ENCODE measurements at regions of chr22 and their contacts with region 1.

Region 1: DNA sequence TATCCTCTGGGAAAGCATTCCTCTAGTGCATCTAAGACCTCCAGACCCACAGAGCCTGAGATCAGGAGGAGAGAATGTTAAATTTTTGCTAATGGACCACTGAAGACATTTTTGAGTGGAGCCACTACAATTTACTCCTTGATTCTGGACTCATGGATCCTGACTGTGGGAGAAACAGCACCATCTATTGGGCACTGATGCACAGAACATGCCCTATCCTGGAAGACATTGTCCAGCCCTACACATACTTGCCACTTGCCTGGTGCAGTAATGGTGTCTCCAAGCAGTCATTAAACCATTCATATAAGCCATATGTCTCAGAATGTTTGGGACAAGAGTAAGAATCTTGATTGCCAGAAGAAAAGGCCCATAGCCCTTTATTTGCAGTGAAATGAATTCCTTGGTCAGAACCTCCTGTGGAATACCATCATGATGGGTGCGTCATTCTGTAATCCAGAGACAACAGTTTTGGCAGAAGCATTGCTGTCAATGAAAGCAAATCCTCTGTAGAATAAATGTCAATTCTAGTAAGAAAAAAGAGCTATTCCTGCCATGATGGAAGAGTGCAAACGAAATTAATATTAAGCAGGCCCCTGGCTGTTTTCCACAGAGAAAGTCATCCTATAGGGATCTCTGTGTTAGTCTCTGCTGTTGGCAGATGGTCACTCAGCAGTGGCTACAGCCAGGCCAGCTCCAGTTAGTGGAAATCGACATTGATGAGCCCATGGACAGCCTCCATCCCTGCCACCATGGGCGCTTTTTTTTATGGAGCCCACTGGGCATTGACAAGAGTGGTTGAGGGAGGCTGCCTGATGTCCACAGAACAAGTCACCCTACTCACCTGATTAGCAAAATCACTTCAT is 43.5 kb downstream of the GGTLC2 start:
- DNase-seq: peak; percentile 65
- ATAC-seq: peak; percentile 79
- H3K4me3 ChIP-seq: no peak overlapping the region
- H3K27ac ChIP-seq: no peak overlapping the region
- H3K4me1 ChIP-seq: peaks cover 21% of the 10 kb centered on the region
- H3K27me3 ChIP-seq: no peaks in the 10 kb centered on the region; the same call in none of the 2 replicates
- CTCF ChIP-seq: peak; percentile 84
- POLR2A ChIP-seq: no peak
- RAD21 ChIP-seq: peak; percentile 81

Region 2: GRCh38 chr22:22587577-22588188 is 100.2 kb before region 1 on chr22:
- CTCF ChIA-PET with region 1: no interaction called
- POLR2A ChIA-PET with region 1: no interaction called
- dilution Hi-C with region 1: no loop called
- in situ Hi-C with region 1: no loop called
- intact Hi-C with region 1: loop called (anchors 2 kb)
- DNase-seq: no peak
- ATAC-seq: no peak
- H3K4me3 ChIP-seq: no peak overlapping the region
- H3K27ac ChIP-seq: no peak overlapping the region
- H3K4me1 ChIP-seq: no peaks in the 10 kb centered on the region
- H3K27me3 ChIP-seq: peaks cover 10% of the 10 kb centered on the region
- CTCF ChIP-seq: no peak
- POLR2A ChIP-seq: no peak
- RAD21 ChIP-seq: no peak

Region 3: GRCh38 chr22:22593964-22594656 is 93.8 kb before region 1 on chr22:
- CTCF ChIA-PET with region 1: no interaction called
- POLR2A ChIA-PET with region 1: no interaction called
- dilution Hi-C with region 1: no loop called
- in situ Hi-C with region 1: no loop called
- intact Hi-C with region 1: loop called (anchors 2 kb)
- DNase-seq: peak; percentile 53
- ATAC-seq: peak; percentile 64
- H3K4me3 ChIP-seq: no peak overlapping the region
- H3K27ac ChIP-seq: no peak overlapping the region
- H3K4me1 ChIP-seq: no peaks in the 10 kb centered on the region
- H3K27me3 ChIP-seq: peaks cover 12% of the 10 kb centered on the region
- CTCF ChIP-seq: peak; percentile 66
- POLR2A ChIP-seq: no peak
- RAD21 ChIP-seq: peak; percentile 61

Region 4: DNA sequence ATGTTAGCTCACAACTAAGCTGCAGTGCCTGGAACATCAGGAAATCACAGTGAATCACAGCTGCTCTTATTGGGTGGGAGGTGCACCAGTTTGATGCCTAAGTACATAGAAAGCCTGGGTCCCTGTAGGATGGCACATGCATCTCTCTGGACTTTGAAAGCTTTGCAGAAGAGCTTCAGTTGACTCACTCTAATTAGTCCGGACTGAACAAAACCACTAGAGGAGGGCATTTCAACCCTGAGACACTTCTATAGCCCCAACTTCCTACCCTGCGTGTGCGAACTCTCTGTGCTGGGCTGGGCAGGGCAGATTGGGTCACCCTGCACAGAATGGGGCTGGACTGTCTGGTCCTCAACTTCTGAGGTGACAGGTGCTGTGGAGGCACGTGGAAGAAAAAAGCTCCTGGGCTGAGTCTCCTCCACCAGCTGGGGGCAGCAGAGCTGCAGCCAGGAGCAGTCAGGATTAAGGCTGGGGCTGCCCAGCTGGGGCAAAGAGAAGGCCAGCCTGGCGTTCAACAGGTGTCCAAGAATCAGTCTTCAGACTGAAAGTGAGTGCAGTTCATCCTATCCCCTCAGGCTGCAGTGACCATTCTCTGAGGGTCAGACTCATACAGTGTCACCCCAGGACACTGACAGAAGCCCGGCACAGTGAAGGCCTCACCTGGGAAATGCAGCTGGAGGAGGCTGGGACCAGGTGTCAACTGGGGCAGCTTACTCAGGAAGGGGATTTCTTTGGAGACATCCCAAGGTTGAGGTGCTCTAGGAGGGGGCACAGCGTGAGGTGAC is 21.4 kb before region 1 on chr22:
- CTCF ChIA-PET with region 1: interaction called, 29 read pairs
- POLR2A ChIA-PET with region 1: no interaction called
- dilution Hi-C with region 1: no loop called
- in situ Hi-C with region 1: no loop called
- intact Hi-C with region 1: loop called (anchors 1 kb)
- DNase-seq: peak; percentile 46
- ATAC-seq: peak; percentile 94
- H3K4me3 ChIP-seq: no peak overlapping the region
- H3K27ac ChIP-seq: no peak overlapping the region
- H3K4me1 ChIP-seq: no peaks in the 10 kb centered on the region
- H3K27me3 ChIP-seq: peaks cover 39% of the 10 kb centered on the region
- CTCF ChIP-seq: peak; percentile 78
- POLR2A ChIP-seq: no peak
- RAD21 ChIP-seq: peak; percentile 79

Region 5: DNA sequence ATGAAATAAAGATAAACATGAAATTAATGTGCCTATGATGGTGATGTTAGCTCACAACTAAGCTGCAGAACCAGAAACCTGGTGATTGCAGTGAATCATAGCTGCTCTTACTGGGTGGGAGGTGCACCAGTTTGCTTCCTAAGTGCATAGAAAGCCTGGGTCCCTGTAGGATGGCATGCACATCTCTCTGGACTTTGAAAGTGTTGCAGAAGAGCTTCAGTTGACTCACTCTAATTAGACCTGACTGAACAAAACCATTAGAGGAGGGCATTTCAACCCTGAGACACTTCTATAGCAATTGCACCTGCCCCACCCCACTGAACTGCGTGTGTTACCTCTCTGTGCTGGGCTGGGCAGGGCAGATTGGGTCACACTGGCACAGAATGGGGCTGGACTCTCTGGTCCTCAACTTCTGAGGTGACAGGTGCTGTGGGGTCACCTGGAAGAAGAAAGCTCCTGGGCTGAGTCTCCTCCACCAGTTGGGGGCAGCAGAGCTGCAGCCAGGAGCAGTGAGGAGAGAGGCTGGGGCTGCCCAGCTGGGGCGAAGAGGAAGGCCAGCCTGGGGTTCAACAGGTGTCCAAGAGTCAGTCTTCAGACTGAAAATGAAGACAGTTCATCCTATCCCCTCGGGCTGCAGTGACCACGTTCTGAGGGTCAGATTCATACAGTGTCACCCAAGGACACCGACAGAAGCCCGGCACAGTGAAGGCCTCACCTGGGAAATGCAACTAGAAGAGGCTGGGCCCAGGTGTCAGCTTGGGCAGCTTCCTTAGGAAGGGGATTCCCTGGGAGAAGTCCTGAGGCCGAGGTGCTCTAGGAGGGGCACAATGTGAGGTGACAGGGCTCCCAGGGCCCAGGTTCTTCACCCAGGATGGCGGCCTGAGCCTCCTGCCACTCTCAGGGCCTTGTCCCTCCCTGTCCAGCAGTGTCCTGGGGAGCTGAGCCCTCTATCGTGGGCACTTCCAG is 14.7 kb after region 1 on chr22:
- CTCF ChIA-PET with region 1: no interaction called
- POLR2A ChIA-PET with region 1: no interaction called
- dilution Hi-C with region 1: no loop called
- in situ Hi-C with region 1: no loop called
- intact Hi-C with region 1: no loop called
- DNase-seq: no peak
- ATAC-seq: no peak
- H3K4me3 ChIP-seq: no peak overlapping the region
- H3K27ac ChIP-seq: no peak overlapping the region
- H3K4me1 ChIP-seq: no peaks in the 10 kb centered on the region
- H3K27me3 ChIP-seq: peaks cover 2% of the 10 kb centered on the region
- CTCF ChIP-seq: no peak
- POLR2A ChIP-seq: no peak
- RAD21 ChIP-seq: no peak